ENCODE measurements at regions of chr19 and their contacts with region 1.

Region 1: GRCh38 chr19:15418588-15419412 is at the start of gene AKAP8L:
- DNase-seq: peak; percentile 100
- ATAC-seq: peak; percentile 95
- H3K4me3 ChIP-seq: peak within 1 kb of the TSS; percentile 69
- H3K27ac ChIP-seq: peak within 1 kb of the TSS; percentile 85
- H3K4me1 ChIP-seq: peaks cover 13% of the 10 kb centered on the region
- H3K27me3 ChIP-seq: no peaks in the 10 kb centered on the region
- CTCF ChIP-seq: peak; percentile 71
- POLR2A ChIP-seq: peak; percentile 90
- RAD21 ChIP-seq: peak; percentile 65
- total RNA-seq, gene AKAP8L: 40.8 and 44.6 TPM in 2 replicates

Region 2: GRCh38 chr19:15177269-15178116 is 241.3 kb before region 1 on chr19:
- CTCF ChIA-PET with region 1: no interaction called
- POLR2A ChIA-PET with region 1: no interaction called
- dilution Hi-C with region 1: no loop called
- in situ Hi-C with region 1: no loop called
- intact Hi-C with region 1: loop called (anchors 10 kb)
- DNase-seq: peak; percentile 64
- ATAC-seq: peak; percentile 99
- H3K4me3 ChIP-seq: no peak overlapping the region
- H3K27ac ChIP-seq: no peak overlapping the region
- H3K4me1 ChIP-seq: peaks cover 2% of the 10 kb centered on the region; the same call in 1 of the 2 replicates
- H3K27me3 ChIP-seq: no peaks in the 10 kb centered on the region
- CTCF ChIP-seq: peak; percentile 98
- POLR2A ChIP-seq: no peak
- RAD21 ChIP-seq: peak; percentile 97

Region 3: GRCh38 chr19:15390814-15391213 is 28.0 kb before region 1 on chr19:
- CTCF ChIA-PET with region 1: interaction called, 4 read pairs
- POLR2A ChIA-PET with region 1: no interaction called
- dilution Hi-C with region 1: no loop called
- in situ Hi-C with region 1: no loop called
- intact Hi-C with region 1: loop called (anchors 1 kb)
- DNase-seq: no peak
- ATAC-seq: no peak
- H3K4me3 ChIP-seq: no peak overlapping the region
- H3K27ac ChIP-seq: no peak overlapping the region
- H3K4me1 ChIP-seq: no peaks in the 10 kb centered on the region; the same call in 1 of the 2 replicates
- H3K27me3 ChIP-seq: no peaks in the 10 kb centered on the region
- CTCF ChIP-seq: no peak
- POLR2A ChIP-seq: no peak
- RAD21 ChIP-seq: no peak